ENCODE measurements at regions of chr19 and their contacts with region 1.

Region 1: GRCh38 chr19:52570000-52570861 is at the start of gene ZNF701:
- DNase-seq: peak; percentile 95 to 98 (median 96)
- ATAC-seq: peak; percentile 100
- H3K4me3 ChIP-seq: peak within 1 kb of the TSS; percentile 51 to 99 (median 74)
- H3K27ac ChIP-seq: peak within 1 kb of the TSS; percentile 65 to 87 (median 82)
- H3K4me1 ChIP-seq: peaks cover 0 to 16% (median 8%) of the 10 kb centered on the region in 12 donors
- H3K27me3 ChIP-seq: no peaks in the 10 kb centered on the region
- CTCF ChIP-seq: peak; percentile 20 to 57 (median 38)
- POLR2A ChIP-seq: peak; percentile 54 to 96
- total RNA-seq, gene ZNF701: 8.3 to 26.6 (median 15.6) TPM

Region 2: DNA sequence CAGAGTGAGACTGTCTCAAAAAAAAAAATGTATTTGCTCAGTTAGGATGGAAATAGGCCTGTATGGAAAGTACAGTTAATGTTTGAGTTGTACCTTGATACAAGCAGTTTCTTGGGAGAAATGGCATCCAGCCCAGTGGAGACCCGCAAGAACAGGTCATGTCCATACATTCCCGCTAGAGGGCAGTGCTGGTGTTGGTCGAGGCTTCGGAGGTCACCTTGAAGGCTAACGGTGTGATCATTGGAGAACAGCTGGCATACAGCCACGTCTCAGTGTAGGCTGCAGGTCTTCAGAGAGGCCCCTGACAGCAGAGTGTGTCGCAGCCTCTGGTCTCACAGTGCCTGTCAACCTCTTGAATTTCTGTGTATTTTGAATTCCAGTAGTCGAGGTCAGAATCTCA is 226.7 kb before region 1 on chr19:
- intact Hi-C with region 1: loop called in 1 of 10 experiments (anchors 10 kb)
- DNase-seq: peak in 4 of 5 donors; percentile 50 to 65 (median 61)
- ATAC-seq: peak in 3 of 4 donors; percentile 48 to 75 (median 75)
- H3K4me3 ChIP-seq: no peak overlapping the region
- H3K27ac ChIP-seq: peak overlapping the region in 1 of 12 donors; percentile 44
- H3K4me1 ChIP-seq: peaks cover 0 to 8% (median 0%) of the 10 kb centered on the region in 12 donors
- H3K27me3 ChIP-seq: no peaks in the 10 kb centered on the region
- CTCF ChIP-seq: peak; percentile 48 to 77 (median 62)
- POLR2A ChIP-seq: no peak

Region 3: GRCh38 chr19:52613299-52613906 is 43.2 kb after region 1 on chr19:
- intact Hi-C with region 1: no loop called
- DNase-seq: no peak
- ATAC-seq: no peak
- H3K4me3 ChIP-seq: no peak overlapping the region
- H3K27ac ChIP-seq: no peak overlapping the region
- H3K4me1 ChIP-seq: no peaks in the 10 kb centered on the region
- H3K27me3 ChIP-seq: no peaks in the 10 kb centered on the region
- CTCF ChIP-seq: no peak
- POLR2A ChIP-seq: no peak